GM13977 (cell line): ENCODE measurements at regions of chr2 and their contacts with region 1.

Region 1: GRCh38 chr2:181305301-181306123 is 151.7 kb upstream of the ITGA4 start:
- DNase-seq: peak; percentile 21
- CTCF ChIP-seq: no peak

Region 2: GRCh38 chr2:181117206-181117925 is 188.1 kb before region 1 on chr2:
- in situ Hi-C with region 1: loop called (anchors 10 kb)
- DNase-seq: no peak
- CTCF ChIP-seq: no peak

Region 3: GRCh38 chr2:181457121-181457740 is 151.7 kb after region 1 on chr2 and contains the start of gene ITGA4:
- in situ Hi-C with region 1: loop called (anchors 10 kb)
- DNase-seq: peak; percentile 82
- CTCF ChIP-seq: peak; percentile 97